Activated naive CD4-positive, alpha-beta T cell treated with anti-CD3 and anti-CD28 coated beads, Interleukin-2, amount 10 ng/mL, durations not matched to agents 7 days and 5 days (primary cell): ENCODE measurements at regions of chr3 and their contacts with region 1.

Region 1: GRCh38 chr3:66971891-66972551 is 26.1 kb upstream of the KBTBD8 start:
- DNase-seq: peak; percentile 75
- H3K4me3 Mint-ChIP-seq: peak overlapping the region; percentile 55
- H3K27ac Mint-ChIP-seq: peak overlapping the region; percentile 80
- H3K4me1 Mint-ChIP-seq: peaks cover 19% of the 10 kb centered on the region
- H3K27me3 Mint-ChIP-seq: peaks cover 4% of the 10 kb centered on the region

Region 2: GRCh38 chr3:66638717-66639116 is 333.3 kb before region 1 on chr3:
- CTCF ChIA-PET with region 1: no interaction called
- DNase-seq: no peak
- H3K4me3 Mint-ChIP-seq: no peak overlapping the region
- H3K27ac Mint-ChIP-seq: no peak overlapping the region
- H3K4me1 Mint-ChIP-seq: no peaks in the 10 kb centered on the region
- H3K27me3 Mint-ChIP-seq: peaks cover 4% of the 10 kb centered on the region

Region 3: DNA sequence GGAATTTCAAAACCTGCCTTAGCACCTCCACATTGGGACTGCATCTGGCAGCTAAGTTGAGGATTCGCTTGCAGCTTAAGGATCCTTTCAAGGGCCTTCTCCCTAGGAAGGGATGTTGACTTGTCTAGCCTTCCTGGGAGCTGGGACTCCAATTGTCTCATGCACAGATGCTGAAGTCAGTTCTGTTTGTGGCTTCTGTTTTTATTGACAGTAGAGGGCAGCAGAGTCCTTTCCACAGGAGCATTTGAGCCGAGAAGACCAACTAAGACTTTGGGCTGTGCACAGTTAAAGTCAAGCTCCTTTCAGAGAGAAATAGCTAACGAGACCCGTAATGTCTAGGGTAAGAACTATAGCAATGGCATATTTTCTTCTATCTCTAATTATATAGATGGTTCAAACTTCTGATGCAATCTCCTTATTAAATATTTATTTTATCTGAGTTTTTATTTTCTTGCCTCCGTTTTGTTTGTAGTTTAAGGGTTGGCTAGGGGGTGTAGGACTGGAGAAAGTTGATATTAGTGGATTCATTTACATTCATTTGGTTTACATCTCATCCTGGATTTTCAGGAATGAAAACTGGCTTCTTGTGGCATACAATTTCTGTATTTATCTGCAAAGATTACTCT is 33.6 kb before region 1 on chr3:
- CTCF ChIA-PET with region 1: interaction called, 17 read pairs
- DNase-seq: peak; percentile 39
- H3K4me3 Mint-ChIP-seq: no peak overlapping the region
- H3K27ac Mint-ChIP-seq: no peak overlapping the region
- H3K4me1 Mint-ChIP-seq: no peaks in the 10 kb centered on the region
- H3K27me3 Mint-ChIP-seq: peaks cover 3% of the 10 kb centered on the region

Region 4: DNA sequence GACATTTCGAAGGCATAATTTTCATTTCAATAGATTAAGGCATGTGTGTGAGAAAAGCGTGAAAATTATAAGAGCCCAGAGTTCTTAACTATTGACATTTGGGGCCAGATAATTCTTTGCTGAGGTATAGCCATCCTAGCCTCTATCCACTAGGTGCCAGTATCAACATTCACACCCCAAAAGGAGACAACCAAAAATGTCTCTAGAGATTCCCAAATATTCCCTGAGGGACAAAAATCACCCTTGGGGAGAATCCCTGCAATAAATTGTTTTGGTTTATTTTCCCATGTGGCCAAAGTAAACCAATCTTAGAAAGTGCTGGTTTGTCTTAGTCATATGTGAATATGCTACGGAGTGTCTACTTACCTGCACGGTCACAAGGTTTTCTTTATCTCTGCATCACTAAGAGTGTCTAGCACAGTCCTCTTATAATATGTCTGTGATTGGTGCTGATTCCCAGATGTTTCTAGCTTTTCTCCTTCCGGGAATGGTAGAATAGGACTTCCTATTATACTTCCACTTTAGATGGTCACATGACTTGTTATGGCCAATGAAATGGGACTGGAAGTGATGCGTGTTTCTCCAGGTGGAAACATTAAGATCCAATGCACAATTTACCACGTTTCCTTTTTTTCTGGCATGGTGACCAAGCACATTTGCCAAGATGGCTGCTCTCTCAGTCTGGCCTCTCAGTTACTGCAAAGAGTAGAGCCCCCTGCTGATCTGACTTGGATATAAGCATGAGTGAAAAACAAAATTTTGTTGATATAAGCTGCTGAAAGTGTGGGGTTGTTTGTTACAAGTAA is 18.0 kb after region 1 on chr3:
- CTCF ChIA-PET with region 1: interaction called, 14 read pairs
- DNase-seq: no peak
- H3K4me3 Mint-ChIP-seq: no peak overlapping the region
- H3K27ac Mint-ChIP-seq: no peak overlapping the region
- H3K4me1 Mint-ChIP-seq: no peaks in the 10 kb centered on the region
- H3K27me3 Mint-ChIP-seq: peaks cover 14% of the 10 kb centered on the region

Region 5: GRCh38 chr3:66998113-66998903 is 26.3 kb after region 1 on chr3 and contains the start of gene KBTBD8:
- CTCF ChIA-PET with region 1: interaction called, 21 read pairs
- DNase-seq: peak; percentile 99
- H3K4me3 Mint-ChIP-seq: peak within 1 kb of the TSS; percentile 93
- H3K27ac Mint-ChIP-seq: peak within 1 kb of the TSS; percentile 89
- H3K4me1 Mint-ChIP-seq: peaks cover 43% of the 10 kb centered on the region
- H3K27me3 Mint-ChIP-seq: peaks cover 16% of the 10 kb centered on the region

Region 6: DNA sequence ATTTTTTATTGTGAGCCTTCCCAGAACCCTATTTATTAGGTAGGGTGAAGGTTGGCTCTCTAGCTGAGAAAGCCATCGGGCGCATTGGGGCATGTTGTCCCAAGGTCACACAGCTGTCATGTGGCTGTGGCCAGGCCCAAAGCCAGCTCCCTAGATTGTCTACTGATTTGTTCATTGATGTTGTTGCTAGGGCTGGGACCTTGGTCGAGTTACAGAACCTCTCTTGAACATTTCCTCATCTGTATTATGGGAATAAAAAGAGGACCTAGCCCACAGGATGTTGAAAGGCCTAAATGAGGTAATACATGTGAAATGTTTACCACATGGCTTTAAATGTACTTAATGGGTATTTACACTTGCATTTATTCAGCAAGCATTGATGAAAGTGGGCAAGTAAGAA is 429.9 kb after region 1 on chr3:
- CTCF ChIA-PET with region 1: no interaction called
- DNase-seq: no peak
- H3K4me3 Mint-ChIP-seq: no peak overlapping the region
- H3K27ac Mint-ChIP-seq: no peak overlapping the region
- H3K4me1 Mint-ChIP-seq: no peaks in the 10 kb centered on the region
- H3K27me3 Mint-ChIP-seq: no peaks in the 10 kb centered on the region

Region 7: DNA sequence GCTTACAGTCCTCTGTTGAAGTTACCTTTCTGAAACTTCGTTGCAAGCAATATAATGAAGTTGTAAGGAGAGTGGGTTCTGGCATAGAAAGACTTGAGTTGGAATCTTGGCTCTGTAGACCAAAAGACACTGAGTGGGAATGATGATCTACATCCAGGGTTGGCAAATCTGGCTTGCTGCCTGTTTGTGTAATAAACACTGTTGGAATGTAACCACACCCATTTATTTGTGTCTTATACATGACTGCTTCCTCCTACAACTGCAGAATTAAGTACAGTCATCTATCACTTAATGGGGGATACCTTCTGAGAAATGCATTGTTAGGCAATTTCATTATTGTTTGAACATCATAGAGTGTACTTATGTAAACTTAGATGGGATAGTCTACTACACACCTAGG is 860.8 kb after region 1 on chr3:
- CTCF ChIA-PET with region 1: no interaction called
- DNase-seq: no peak
- H3K4me3 Mint-ChIP-seq: no peak overlapping the region
- H3K27ac Mint-ChIP-seq: no peak overlapping the region
- H3K4me1 Mint-ChIP-seq: no peaks in the 10 kb centered on the region
- H3K27me3 Mint-ChIP-seq: no peaks in the 10 kb centered on the region